GM23248 (cell line): ENCODE measurements at regions of chr3 and their contacts with region 1.

Region 1: GRCh38 chr3:132034486-132035464 is at the start of gene CPNE4:
- DNase-seq: peak; percentile 90
- H3K4me3 ChIP-seq: peak within 1 kb of the TSS; percentile 75
- H3K27ac ChIP-seq: no peak within 1 kb of the TSS
- H3K4me1 ChIP-seq: peaks cover 8% of the 10 kb centered on the region; the same call in 1 of the 2 replicates
- H3K27me3 ChIP-seq: peaks cover 30% of the 10 kb centered on the region
- total RNA-seq, gene CPNE4: 0.11 and 0.25 TPM in 2 replicates

Region 2: GRCh38 chr3:131458653-131459052 is 576.1 kb before region 1 on chr3:
- in situ Hi-C with region 1: no loop called
- DNase-seq: no peak
- H3K4me3 ChIP-seq: no peak overlapping the region
- H3K27ac ChIP-seq: no peak overlapping the region
- H3K4me1 ChIP-seq: peaks cover 16% of the 10 kb centered on the region
- H3K27me3 ChIP-seq: no peaks in the 10 kb centered on the region

Region 3: GRCh38 chr3:131794766-131795388 is 239.9 kb before region 1 on chr3:
- in situ Hi-C with region 1: loop called (anchors 10 kb)
- DNase-seq: peak; percentile 75
- H3K4me3 ChIP-seq: no peak overlapping the region
- H3K27ac ChIP-seq: no peak overlapping the region
- H3K4me1 ChIP-seq: no peaks in the 10 kb centered on the region
- H3K27me3 ChIP-seq: no peaks in the 10 kb centered on the region